Dendritic cell treated with granulocyte-macrophage colony-stimulating factor and Interleukin-4, amounts not matched to agents 40 ng/mL and 50 ng/mL, for 4 days (primary cell): ENCODE measurements at regions of chr12 and their contacts with region 1.

Region 1: GRCh38 chr12:4320853-4321701 is at the start of gene TIGAR:
- H3K4me3 Mint-ChIP-seq: peak within 1 kb of the TSS; percentile 98
- H3K27ac Mint-ChIP-seq: peak within 1 kb of the TSS; percentile 98
- H3K4me1 Mint-ChIP-seq: peaks cover 38% of the 10 kb centered on the region
- H3K27me3 Mint-ChIP-seq: peaks cover 4% of the 10 kb centered on the region

Region 2: DNA sequence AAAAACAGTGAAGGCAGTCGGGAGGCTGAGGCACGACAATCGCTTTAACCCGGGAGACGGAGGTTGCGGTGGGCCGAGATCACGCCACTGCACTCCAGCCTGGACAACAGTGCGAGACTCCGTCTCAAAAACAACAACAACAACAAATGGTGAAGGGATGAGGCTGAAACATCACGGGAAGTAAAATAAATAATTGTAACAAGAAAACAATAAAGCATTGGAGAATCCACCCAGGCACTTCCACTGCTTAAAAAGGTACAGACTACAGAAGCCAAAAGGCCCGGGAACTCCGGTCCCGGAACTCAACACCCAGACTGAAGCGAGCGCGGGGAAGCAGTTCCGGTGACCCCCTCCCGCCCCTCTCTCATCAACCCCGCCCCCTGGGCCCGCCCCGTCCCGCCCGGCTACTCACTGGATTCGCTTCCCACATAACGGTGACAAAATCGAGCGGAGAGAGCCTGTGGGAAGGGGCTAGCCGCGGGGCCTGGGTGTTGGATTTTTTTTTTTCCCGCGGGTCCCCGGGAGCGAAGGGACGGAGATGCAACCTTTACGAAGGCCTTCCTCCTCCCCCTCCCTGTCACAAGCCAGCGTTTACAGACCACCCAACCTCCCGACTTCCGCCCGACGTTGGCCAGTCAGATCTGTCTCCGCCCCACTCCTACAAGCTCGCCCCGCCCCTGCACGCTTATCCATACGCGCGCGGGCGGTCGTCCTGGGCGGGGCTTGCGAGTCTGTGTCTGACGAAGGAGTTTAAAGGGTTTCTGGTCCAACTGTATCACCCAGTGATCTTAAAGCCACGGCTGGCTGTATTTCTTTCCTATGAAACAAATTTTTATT is 448.1 kb before region 1 on chr12 and contains the start of gene PARP11:
- intact Hi-C with region 1: loop called (anchors 5 kb)
- H3K4me3 Mint-ChIP-seq: peak within 1 kb of the TSS; percentile 90
- H3K27ac Mint-ChIP-seq: peak within 1 kb of the TSS; percentile 96
- H3K4me1 Mint-ChIP-seq: peaks cover 42% of the 10 kb centered on the region
- H3K27me3 Mint-ChIP-seq: peaks cover 1% of the 10 kb centered on the region

Region 3: GRCh38 chr12:4287325-4288211 is 33.5 kb before region 1 on chr12:
- intact Hi-C with region 1: loop called (anchors 5 kb)
- H3K4me3 Mint-ChIP-seq: peak overlapping the region; percentile 41
- H3K27ac Mint-ChIP-seq: peak overlapping the region; percentile 88
- H3K4me1 Mint-ChIP-seq: peaks cover 84% of the 10 kb centered on the region
- H3K27me3 Mint-ChIP-seq: peaks cover 1% of the 10 kb centered on the region

Region 4: DNA sequence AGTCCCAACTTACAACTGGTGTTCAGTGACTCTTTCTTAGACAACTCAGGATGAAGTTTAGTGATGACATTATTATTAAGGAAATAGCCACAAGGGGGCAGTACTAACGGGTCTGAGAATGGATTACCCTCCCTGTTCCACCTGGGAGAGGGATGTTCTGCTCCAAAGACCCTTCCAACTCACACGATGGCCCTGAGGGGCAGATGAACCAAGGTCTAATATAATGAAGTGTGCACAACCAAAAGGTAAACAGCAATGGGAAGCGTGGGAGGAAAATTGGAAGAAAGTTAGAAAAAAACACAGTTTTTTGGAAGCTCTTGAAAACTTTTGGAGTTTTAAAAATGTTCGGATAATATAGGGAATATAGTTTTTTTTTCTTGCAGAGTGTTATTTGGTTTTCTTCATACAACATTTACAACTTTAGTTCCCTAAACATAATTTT is 100.5 kb after region 1 on chr12:
- intact Hi-C with region 1: loop called (anchors 5 kb)
- H3K4me3 Mint-ChIP-seq: no peak overlapping the region
- H3K27ac Mint-ChIP-seq: no peak overlapping the region
- H3K4me1 Mint-ChIP-seq: peaks cover 29% of the 10 kb centered on the region
- H3K27me3 Mint-ChIP-seq: peaks cover 14% of the 10 kb centered on the region

Region 5: DNA sequence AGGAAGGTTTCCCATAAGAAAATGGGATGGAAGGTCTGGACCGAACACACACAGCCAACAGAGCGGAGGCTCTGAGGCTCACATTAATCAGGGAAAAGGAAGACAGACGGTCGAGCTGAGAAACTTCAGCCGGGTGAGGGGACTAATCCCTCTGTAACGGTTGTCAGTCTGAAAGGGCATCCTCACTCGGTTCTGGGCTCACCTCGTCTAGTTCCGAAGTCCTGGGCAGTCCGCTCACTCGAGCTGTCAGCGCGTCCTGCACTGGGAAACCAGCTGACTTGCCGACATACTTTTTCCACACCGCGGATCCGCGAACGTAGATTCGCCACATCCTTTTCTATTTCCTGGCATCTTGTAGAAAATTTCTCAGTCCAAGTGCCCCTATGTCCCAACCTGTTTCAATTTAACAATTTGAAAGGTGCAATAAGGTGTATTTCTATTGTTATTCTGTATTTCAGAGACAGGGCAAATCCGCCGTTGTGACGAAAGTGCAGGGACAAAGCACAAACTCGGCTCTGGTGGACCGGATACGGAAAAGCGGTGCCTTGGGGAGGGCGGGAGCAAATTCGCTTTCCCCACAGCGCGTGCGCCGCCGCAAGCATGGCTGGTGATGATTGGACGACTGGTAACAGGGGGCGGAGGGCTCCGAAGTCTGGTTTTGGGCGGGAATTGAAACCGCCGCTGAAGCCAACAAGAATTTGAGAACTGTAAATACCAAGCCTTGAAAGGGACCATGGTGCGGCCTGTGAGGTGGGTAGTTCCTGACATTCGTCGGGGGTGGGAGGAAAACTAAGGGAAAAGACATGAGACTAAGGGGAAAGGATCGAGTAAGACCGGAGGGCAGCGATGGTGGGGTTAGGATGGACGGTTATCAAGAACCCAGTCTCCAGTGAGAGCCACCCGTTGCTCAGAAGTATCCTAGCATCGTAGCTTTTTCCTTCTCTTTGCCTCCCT is 217.4 kb after region 1 on chr12 and contains the start of gene RAD51AP1:
- intact Hi-C with region 1: loop called (anchors 5 kb)
- H3K4me3 Mint-ChIP-seq: peak within 1 kb of the TSS; percentile 92
- H3K27ac Mint-ChIP-seq: peak within 1 kb of the TSS; percentile 96
- H3K4me1 Mint-ChIP-seq: peaks cover 21% of the 10 kb centered on the region
- H3K27me3 Mint-ChIP-seq: no peaks in the 10 kb centered on the region

Region 6: DNA sequence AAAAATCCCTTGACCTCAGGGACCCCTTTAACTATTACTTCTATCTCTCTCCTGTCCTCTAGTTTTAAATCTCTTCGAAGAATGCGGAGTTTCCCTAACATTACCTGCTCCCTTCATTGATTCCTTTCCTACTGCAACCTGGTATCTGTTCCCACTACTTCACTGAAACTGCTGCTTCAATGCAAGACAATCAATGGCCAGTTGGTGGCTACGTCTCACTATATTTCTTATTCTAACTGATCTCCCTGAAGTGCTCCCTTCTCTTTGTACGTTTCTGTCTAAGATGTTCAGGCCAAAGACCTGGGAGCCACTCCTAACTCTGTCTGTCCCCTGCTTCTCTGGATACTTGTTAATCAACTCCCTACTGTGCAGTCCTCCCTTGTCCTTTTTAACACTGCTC is 578.3 kb after region 1 on chr12:
- intact Hi-C with region 1: no loop called
- H3K4me3 Mint-ChIP-seq: no peak overlapping the region
- H3K27ac Mint-ChIP-seq: no peak overlapping the region
- H3K4me1 Mint-ChIP-seq: no peaks in the 10 kb centered on the region
- H3K27me3 Mint-ChIP-seq: peaks cover 24% of the 10 kb centered on the region